ENCODE measurements at regions of chr1 and their contacts with region 1.

Region 1: DNA sequence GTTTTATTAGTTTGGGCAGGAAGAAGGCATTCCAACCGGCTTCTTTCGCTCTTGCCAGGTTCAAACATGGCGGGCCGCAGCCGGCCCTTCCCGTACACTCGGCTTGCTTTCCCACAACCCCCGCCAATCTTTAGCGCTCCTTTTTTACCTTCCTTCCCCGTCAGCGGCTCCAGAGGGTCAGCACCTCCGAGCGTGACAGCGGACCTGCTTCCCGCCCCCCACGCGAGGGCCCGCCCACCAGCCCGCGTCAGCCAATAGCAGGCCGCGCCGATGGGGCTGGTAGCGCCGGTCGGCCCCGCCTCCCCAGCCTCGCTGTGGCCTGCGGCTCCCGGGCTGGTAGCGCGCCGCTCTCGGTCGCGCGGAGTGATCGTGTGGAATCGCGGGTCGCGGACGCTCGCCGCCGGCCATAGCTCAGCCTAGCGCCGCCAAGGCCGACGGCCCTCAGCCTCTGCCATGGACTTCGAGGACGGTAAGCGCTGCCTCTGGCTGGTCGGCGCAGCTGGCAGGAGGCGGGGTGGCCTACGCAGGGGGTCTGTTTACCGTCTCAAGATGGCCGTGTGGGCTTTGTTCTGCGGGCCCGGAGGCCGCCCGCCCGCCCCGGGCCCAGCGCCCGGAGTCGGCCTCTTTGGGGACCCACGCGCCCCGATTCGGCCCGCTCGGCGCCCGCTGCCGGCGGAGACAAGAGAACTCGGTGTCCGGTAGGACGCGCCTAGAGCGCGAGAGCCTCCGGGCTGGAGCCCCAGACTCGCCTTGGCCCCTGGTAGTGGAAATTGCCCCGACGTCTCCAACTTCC is at the start of gene ZNF326:
- DNase-seq: peak; percentile 96
- H3K4me3 ChIP-seq: peak within 1 kb of the TSS; percentile 93
- H3K27ac ChIP-seq: peak within 1 kb of the TSS; percentile 97
- H3K27me3 ChIP-seq: no peaks in the 10 kb centered on the region
- CTCF ChIP-seq: no peak

Region 2: DNA sequence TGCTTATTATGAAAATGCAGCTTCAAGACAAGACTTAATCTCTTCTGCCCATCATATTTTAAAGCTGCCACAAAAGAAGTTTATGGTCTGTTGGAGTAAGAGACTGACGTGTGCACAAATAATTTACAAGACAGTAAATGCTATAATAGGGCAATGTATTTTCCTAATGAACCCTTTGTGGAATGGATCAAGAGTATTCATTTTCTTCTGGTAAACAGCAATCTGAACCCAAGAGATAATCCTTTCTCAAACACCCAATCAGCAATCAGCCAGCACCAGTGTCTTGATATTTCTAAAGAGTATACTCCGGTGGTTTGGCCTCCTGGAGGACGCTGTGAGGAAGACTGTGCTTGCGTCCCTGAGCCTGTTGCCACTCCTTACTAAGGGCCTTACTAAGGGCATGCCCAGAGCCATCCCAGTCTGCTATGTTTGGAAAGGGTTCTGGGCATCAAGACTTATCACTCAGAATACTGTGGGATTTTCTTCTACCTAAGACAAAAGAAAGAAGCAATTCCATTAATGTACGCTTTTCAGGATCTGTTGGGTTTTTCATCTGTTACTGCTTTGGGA is 222.9 kb before region 1 on chr1:
- in situ Hi-C with region 1: no loop called
- DNase-seq: no peak
- H3K4me3 ChIP-seq: no peak overlapping the region
- H3K27ac ChIP-seq: no peak overlapping the region
- H3K27me3 ChIP-seq: no peaks in the 10 kb centered on the region
- CTCF ChIP-seq: no peak

Region 3: DNA sequence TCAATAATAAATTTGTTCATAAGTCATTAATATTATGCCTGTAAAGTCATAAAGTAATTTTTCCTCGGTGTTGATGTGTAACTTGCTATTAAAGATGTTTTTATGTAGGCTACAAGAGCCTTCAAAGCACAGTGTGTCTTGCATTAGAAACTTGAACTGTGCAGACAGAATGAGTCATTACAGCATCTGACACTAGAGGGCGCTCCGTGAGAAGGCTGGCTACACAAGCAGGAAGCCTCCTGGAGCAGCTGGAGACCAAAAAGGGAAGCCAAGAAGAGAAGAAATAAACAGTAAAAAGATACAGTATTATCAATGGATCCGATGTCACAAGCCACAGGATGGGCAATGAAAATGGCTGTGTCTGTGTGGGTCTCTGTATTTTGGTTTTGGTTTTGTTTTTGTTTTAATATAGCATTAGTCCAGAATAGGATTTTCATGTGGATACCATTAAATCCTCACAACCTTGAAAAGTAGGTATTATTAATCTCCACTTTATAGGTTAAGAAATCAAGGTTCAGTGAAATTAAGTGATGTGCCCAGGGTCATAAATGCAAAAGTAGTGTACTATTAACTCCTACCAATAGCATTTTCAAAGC is 190.3 kb before region 1 on chr1:
- in situ Hi-C with region 1: loop called (anchors 25 kb)
- DNase-seq: peak; percentile 83
- H3K4me3 ChIP-seq: no peak overlapping the region
- H3K27ac ChIP-seq: no peak overlapping the region
- H3K27me3 ChIP-seq: no peaks in the 10 kb centered on the region
- CTCF ChIP-seq: peak; percentile 94

Region 4: DNA sequence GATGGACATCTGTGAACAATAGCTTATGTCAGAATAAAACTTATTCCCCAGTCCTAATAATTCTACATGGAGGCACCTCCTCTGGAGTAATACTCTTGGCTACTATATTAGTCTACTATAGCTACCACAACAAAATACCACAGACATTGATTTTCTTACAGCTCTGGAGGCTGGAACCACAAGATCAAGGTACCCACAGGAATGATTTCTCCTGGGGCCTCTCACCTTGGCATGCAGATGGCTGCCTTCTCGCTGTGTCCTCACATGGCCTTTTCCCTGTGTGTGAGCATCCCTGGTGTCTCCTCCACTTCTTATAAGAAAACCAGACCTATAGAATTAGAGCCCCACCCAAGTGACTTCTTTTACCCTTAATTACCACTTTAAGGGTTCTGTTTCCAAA is 477.8 kb after region 1 on chr1:
- in situ Hi-C with region 1: no loop called
- DNase-seq: no peak
- H3K4me3 ChIP-seq: no peak overlapping the region
- H3K27ac ChIP-seq: no peak overlapping the region
- H3K27me3 ChIP-seq: no peaks in the 10 kb centered on the region
- CTCF ChIP-seq: no peak